GM10248 (cell line): ENCODE measurements at regions of chr20 and their contacts with region 1.

Region 1: GRCh38 chr20:19205977-19206396 is 6.5 kb upstream of the SLC24A3 start:
- DNase-seq: peak; percentile 65
- CTCF ChIP-seq: peak; percentile 83

Region 2: GRCh38 chr20:18632196-18633009 is 573.6 kb before region 1 on chr20:
- CTCF ChIA-PET with region 1: interaction called, 14 read pairs
- POLR2A ChIA-PET with region 1: no interaction called
- DNase-seq: peak; percentile 62
- CTCF ChIP-seq: peak; percentile 99

Region 3: DNA sequence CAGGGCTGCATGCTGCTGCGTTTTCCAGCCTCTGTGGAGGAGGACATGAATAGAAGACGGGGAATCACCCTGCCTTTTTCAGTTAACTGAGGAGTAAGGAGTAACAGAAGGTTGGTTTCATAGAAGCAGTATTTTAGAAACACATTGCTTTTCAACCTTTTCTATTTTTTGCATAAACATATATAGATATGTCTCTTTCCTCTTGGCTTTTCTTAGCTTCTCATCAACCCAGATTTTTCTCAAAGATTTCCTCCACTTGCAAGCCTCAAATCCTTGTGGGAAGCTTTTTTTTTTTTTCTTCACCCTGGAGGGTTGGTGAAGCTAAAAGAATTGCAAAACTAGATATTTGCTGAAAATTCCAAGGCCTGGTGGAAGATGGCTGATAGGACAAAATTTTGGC is 12.4 kb after region 1 on chr20:
- CTCF ChIA-PET with region 1: interaction called, 17 read pairs
- POLR2A ChIA-PET with region 1: no interaction called
- DNase-seq: no peak
- CTCF ChIP-seq: no peak

Region 4: GRCh38 chr20:19249106-19249879 is 43.3 kb after region 1 on chr20:
- CTCF ChIA-PET with region 1: interaction called, 11 read pairs
- POLR2A ChIA-PET with region 1: no interaction called
- DNase-seq: no peak
- CTCF ChIP-seq: peak; percentile 5

Region 5: DNA sequence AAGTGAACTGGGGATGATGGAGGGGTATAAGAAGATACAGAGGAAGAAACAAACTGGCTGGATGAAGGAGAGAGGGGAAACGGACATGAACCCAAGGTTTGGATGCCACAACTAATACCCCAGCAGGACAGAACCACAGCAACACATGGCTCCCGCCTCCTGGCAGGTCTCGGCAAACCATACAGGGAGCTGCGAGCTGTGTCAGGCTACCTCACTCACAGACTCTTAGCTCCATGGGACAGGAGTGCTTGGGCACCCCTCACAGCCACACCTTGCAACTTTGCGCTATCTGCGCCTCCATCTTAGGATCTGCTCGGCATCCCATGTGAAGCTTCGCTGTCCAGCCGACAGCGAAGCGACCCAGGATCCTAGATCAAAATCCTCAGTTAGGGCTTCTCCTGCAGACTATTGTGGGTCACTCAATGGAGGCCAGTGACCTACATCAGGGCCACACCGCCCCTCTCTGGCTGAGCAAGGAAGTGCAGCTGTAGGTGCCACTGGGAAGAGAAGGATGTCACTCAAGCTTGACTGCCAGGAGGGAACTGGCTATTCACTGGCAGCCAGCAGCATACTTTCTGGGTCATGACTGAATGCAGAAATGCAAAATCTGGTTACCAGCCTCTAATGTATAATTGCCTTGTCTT is 377.7 kb after region 1 on chr20:
- CTCF ChIA-PET with region 1: interaction called, 91 read pairs
- POLR2A ChIA-PET with region 1: no interaction called
- DNase-seq: peak; percentile 71
- CTCF ChIP-seq: peak; percentile 88

Region 6: GRCh38 chr20:19588732-19589131 is 382.7 kb after region 1 on chr20:
- CTCF ChIA-PET with region 1: interaction called, 91 read pairs
- POLR2A ChIA-PET with region 1: no interaction called
- DNase-seq: no peak
- CTCF ChIP-seq: no peak

Region 7: DNA sequence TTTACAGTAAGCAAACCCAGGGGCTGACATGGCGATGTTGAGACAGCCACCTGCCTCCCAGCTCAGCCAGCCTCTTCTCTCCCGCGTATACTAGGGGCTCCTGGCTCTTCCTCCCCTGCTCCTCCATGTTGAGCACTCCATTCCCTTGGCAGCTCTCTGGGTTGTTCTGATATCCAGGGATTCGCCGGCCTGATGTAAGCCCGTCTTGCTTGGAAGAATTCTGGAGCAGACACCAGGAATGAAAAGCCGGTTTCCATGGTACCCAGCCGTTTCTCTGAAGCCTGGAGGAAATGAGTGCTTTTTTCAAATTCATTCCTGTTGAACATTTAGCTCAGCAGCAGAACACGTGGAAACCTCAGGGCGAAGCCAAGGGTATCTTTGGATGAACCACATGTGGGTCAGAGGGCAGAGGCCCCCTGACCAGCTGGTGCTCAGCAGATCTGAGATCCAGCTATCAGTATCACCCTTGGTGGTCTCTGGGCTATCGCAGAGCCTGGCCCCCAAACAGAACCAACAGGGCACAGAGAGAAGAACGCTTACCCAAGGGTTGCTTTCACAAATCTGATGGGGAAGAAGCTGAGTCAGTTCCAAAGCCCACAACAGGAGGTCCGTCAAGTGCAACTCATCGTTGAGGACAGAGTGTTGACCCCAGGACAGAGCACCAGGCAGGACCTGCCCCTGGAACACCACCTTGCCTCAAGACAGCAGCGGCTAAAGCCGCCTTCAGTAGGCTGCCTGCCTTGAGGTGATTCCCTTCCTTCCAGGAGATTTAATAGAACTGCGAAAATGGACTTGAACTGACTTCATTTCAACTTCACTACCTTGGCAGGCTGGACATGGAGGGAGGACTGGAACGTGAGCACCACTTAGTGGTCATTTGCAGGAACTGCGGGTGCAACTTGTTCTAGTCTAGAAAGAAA is 456.0 kb after region 1 on chr20:
- CTCF ChIA-PET with region 1: interaction called, 54 read pairs
- POLR2A ChIA-PET with region 1: no interaction called
- DNase-seq: peak; percentile 64
- CTCF ChIP-seq: peak; percentile 90